Colonic mucosa (tissue), 4 donors: ENCODE measurements at regions of chr15 and their contacts with region 1.

Region 1: GRCh38 chr15:40893733-40894688 is at the start of gene VPS18:
- DNase-seq: peak; percentile 99
- H3K4me3 ChIP-seq: peak within 1 kb of the TSS; percentile 70
- H3K27ac ChIP-seq: peak within 1 kb of the TSS; percentile 82
- H3K4me1 ChIP-seq: peaks cover 9% of the 10 kb centered on the region
- H3K27me3 ChIP-seq: no peaks in the 10 kb centered on the region
- CTCF ChIP-seq: peak; percentile 99
- total RNA-seq, gene VPS18: 18.3 to 19.2 TPM

Region 2: DNA sequence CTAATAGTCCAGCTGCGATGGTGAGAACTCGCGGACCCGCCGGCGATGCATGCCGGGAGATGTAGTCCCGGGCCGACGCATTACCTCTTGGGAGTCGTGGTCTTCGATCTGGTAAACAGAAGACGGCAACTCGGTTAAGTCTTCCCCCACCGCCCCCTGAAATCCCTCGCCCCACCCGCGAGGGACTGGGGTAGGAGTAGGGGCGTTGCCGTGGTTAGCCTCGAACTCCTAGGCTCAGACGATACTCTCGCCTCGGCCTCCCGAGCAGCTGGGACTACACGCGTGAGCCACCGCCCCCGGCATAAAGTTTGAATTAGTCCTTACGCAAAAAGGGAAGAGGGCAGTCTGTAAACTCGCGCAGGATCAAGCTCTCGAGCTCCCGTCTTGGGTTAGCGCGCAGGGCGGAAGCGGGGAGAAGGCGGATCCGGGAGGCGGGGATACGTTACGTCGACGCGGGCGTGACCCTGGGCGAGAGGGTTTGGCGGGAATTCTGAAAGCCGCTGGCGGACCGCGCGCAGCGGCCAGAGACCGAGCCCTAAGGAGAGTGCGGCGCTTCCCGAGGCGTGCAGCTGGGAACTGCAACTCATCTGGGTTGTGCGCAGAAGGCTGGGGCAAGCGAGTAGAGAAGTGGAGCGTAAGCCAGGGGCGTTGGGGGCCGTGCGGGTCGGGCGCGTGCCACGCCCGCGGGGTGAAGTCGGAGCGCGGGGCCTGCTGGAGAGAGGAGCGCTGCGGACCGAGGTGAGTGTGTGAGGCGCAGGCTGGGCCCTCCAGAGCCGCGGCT is 199.1 kb before region 1 on chr15 and contains the start of gene RAD51:
- intact Hi-C with region 1: loop called (anchors 10 kb)
- DNase-seq: peak; percentile 96
- H3K4me3 ChIP-seq: peak within 1 kb of the TSS; percentile 73
- H3K27ac ChIP-seq: peak within 1 kb of the TSS; percentile 100
- H3K4me1 ChIP-seq: peaks cover 5% of the 10 kb centered on the region
- H3K27me3 ChIP-seq: no peaks in the 10 kb centered on the region
- CTCF ChIP-seq: no peak
- total RNA-seq, gene RAD51: 10.0 to 30.5 TPM

Region 3: DNA sequence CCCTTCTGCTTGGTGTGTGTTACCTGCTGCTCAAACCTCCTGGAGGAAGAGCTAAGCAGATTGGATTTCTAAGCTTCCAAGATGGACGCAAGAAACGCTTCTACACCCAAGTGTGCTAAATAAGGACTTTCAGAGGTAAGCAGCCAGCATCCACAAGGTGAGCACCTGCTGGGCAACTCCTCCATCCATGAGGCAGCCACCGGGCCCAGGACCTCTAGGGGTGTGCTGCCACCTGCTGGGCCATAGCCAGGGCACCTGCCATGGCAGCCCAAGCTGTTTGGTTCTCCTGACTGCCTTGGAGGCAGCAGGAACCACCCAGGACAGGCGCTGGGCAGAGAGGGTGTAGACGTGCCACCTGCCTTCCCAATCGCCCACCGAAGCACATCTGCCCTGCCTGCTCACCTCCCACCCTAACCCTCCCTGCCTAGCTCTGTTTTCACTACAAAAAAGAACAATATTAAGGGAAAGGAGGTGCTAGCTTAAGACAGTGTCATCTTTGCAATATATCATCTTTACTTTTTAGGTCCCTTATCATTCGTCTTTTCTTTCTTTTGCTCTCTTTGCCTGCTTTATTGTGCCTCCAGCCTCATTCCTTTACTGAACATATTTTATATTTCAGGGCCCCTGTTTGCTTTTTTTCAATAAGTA is 111.3 kb before region 1 on chr15:
- intact Hi-C with region 1: loop called (anchors 10 kb)
- DNase-seq: peak; percentile 83
- H3K4me3 ChIP-seq: no peak overlapping the region
- H3K27ac ChIP-seq: no peak overlapping the region
- H3K4me1 ChIP-seq: peaks cover 7% of the 10 kb centered on the region
- H3K27me3 ChIP-seq: no peaks in the 10 kb centered on the region
- CTCF ChIP-seq: peak; percentile 72

Region 4: GRCh38 chr15:40857601-40858341 is 36.2 kb before region 1 on chr15:
- intact Hi-C with region 1: loop called (anchors 5 kb)
- DNase-seq: peak; percentile 94
- H3K4me3 ChIP-seq: no peak overlapping the region
- H3K27ac ChIP-seq: peak overlapping the region; percentile 85
- H3K4me1 ChIP-seq: peaks cover 14% of the 10 kb centered on the region
- H3K27me3 ChIP-seq: no peaks in the 10 kb centered on the region
- CTCF ChIP-seq: peak; percentile 96